ENCODE measurements at regions of chr5 and their contacts with region 1.

Region 1: DNA sequence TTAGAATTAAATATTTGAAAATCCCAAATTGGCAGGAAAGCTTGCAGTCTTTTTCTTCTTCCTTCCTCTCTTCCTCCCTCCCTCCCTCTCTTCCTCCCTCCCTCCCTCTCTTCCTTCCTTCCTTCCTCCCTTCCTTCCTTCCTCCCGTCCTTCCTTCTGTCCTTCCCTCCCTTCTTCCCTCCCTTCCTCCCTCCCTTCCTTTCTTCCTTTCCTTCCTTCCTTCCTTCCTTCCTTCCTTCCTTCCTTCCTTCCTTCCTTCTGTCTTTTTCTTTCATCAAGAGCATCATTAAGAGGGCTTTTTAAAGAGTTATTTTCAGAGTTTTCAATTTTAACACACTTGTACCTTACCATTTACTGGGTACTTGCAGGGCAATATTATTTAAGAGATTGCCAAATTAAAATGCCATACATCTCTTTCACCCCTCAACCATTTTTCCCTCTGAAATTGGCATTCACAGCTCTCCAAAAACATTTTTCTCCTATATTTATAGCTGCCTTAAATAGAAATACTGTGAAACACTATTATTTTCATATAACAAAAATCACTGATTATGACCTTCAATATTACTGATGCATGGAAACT is 99.2 kb upstream of the C6 start:
- DNase-seq: no peak
- ATAC-seq: no peak
- H3K4me3 ChIP-seq: no peak overlapping the region
- H3K27ac ChIP-seq: no peak overlapping the region
- H3K4me1 ChIP-seq: no peaks in the 10 kb centered on the region
- H3K27me3 ChIP-seq: no peaks in the 10 kb centered on the region
- CTCF ChIP-seq: no peak

Region 2: GRCh38 chr5:41289970-41290464 is 22.6 kb before region 1 on chr5:
- intact Hi-C with region 1: loop called in 1 of 10 experiments (anchors 2 kb)
- DNase-seq: no peak
- ATAC-seq: peak in 1 of 8 donors; percentile 51
- H3K4me3 ChIP-seq: no peak overlapping the region
- H3K27ac ChIP-seq: no peak overlapping the region
- H3K4me1 ChIP-seq: peaks cover 0 to 14% (median 0%) of the 10 kb centered on the region in 9 donors
- H3K27me3 ChIP-seq: no peaks in the 10 kb centered on the region
- CTCF ChIP-seq: no peak